ENCODE measurements at regions of chr2 and their contacts with region 1.

Region 1: GRCh38 chr2:219645631-219646527 is 18.4 kb downstream of the SLC4A3 start:
- DNase-seq: no peak
- ATAC-seq: no peak
- H3K4me3 ChIP-seq: no peak overlapping the region
- H3K27ac ChIP-seq: no peak overlapping the region
- H3K4me1 ChIP-seq: no peaks in the 10 kb centered on the region
- H3K27me3 ChIP-seq: no peaks in the 10 kb centered on the region
- CTCF ChIP-seq: no peak
- POLR2A ChIP-seq: no peak

Region 2: DNA sequence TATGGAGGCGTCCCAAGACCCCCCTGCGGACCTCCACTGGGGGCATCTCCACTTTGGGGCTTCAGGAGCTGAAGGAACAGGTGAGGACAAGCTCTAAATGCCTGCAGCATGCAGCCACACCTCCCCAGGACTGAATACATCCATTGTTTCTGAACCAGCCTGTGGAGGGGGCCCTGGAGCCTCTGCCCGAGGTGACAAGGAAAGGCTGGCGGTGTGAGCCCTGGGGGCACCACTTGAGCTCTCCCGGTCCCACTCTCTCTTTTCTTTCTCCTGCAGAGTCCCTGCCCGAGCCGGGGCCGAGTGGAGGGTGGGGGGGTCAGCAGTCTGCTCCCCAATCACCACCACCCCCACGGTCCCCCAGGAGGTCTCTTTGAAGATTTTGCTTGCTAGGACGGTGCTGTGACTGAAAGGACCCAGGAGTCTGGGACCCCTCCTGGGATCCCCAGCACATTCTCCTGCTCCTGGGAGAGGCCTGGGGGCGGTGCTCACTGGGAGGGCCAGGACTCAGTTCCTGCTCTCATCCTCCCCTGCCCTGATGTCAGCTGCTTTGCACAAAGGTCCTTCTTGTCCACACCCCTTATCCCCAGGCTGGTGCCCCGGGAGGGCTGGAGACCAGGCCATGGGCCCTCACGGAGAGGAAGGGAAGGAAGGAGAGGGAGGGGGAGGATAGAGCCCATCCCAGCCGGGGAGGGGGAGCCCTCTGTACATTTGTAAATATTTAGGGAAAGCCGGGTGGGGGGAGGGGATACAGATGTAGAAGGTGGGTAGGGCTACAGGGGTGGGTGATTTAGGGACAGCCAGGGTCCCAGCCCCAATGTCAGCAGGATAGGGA is 108.0 kb before region 1 on chr2:
- intact Hi-C with region 1: loop called in 1 of 2 experiments (anchors 5 kb)
- DNase-seq: no peak
- ATAC-seq: no peak
- H3K4me3 ChIP-seq: no peak overlapping the region
- H3K27ac ChIP-seq: no peak overlapping the region
- H3K4me1 ChIP-seq: peaks cover 0 to 13% (median 5%) of the 10 kb centered on the region in 4 donors
- H3K27me3 ChIP-seq: no peaks in the 10 kb centered on the region
- CTCF ChIP-seq: no peak
- POLR2A ChIP-seq: no peak